ENCODE measurements at regions of chr9 and their contacts with region 1.

Region 1: GRCh38 chr9:71670121-71670520 is 98.2 kb downstream of the CEMIP2 start:
- DNase-seq: no peak
- ATAC-seq: no peak
- H3K4me3 ChIP-seq: no peak overlapping the region
- H3K27ac ChIP-seq: no peak overlapping the region
- H3K4me1 ChIP-seq: peaks cover 0 to 15% (median 0%) of the 10 kb centered on the region in 9 donors
- H3K27me3 ChIP-seq: no peaks in the 10 kb centered on the region
- CTCF ChIP-seq: no peak

Region 2: DNA sequence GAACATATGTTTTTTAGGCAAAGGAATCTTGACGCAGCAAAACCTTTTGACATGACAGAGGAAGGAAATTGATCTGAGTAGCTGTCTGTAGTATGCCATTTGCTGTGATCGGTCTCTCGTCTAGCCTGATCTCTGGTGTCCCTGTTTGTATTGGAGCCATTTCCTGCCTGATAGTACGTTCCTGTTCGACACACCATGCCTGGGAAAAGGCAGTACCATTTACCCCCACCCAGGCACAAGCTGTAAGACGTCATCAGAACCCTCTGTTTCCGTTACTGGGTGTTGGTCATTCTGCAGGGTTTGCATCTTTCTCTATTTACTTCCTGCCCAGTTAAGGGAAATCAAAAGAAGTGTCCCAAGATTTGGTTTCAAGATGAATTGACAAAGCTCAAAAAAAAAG is 31.5 kb before region 1 on chr9:
- intact Hi-C with region 1: loop called in 1 of 10 experiments (anchors 5 kb)
- DNase-seq: peak in 1 of 2 donors; percentile 55
- ATAC-seq: peak; percentile 80 to 96 (median 90)
- H3K4me3 ChIP-seq: peak overlapping the region in 1 of 10 donors; percentile 15
- H3K27ac ChIP-seq: peak overlapping the region in 9 of 10 donors; percentile 31 to 82 (median 68)
- H3K4me1 ChIP-seq: peaks cover 0 to 54% (median 17%) of the 10 kb centered on the region in 9 donors
- H3K27me3 ChIP-seq: no peaks in the 10 kb centered on the region
- CTCF ChIP-seq: no peak

Measured in heart right ventricle (tissue), 16 donors.